ENCODE measurements at regions of chr18 and their contacts with region 1.

Region 1: GRCh38 chr18:45967007-45967706 is at the start of gene EPG5:
- DNase-seq: peak; percentile 88
- ATAC-seq: peak; percentile 100
- H3K4me3 Mint-ChIP-seq: peak within 1 kb of the TSS; percentile 98
- H3K27ac Mint-ChIP-seq: peak within 1 kb of the TSS; percentile 87
- H3K4me1 Mint-ChIP-seq: peaks cover 42% of the 10 kb centered on the region
- H3K27me3 Mint-ChIP-seq: no peaks in the 10 kb centered on the region
- CTCF ChIP-seq: no peak
- total RNA-seq, gene EPG5: 34.2 and 38.3 TPM in 2 replicates

Region 2: DNA sequence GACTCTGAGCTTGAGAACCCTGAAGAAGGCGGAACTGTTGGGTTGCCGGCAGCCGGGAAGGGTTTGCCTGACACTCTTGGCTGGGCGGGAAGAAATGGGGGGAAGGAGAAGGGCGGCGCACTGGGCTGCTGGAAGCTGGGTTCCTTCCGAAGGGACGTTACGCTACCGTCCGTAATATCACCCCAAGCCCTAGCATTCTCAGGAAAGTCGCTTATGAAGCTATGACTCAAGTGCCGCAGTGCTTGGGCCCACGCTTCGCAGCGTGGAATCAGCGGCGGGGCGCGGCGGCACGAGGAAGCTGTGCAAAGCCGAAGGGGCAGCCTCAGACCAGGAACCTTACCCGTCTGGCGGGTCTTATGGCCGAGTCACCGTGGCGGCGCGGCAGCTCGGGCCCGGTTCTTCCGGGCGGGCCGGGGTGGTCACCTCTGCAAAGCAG is 191.9 kb before region 1 on chr18:
- CTCF ChIA-PET with region 1: no interaction called
- POLR2A ChIA-PET with region 1: no interaction called
- intact Hi-C with region 1: loop called (anchors 5 kb)
- DNase-seq: peak; percentile 39
- ATAC-seq: peak; percentile 80
- H3K4me3 Mint-ChIP-seq: peak overlapping the region; percentile 85
- H3K27ac Mint-ChIP-seq: no peak overlapping the region
- H3K4me1 Mint-ChIP-seq: peaks cover 25% of the 10 kb centered on the region
- H3K27me3 Mint-ChIP-seq: peaks cover 40% of the 10 kb centered on the region
- CTCF ChIP-seq: no peak

Region 3: DNA sequence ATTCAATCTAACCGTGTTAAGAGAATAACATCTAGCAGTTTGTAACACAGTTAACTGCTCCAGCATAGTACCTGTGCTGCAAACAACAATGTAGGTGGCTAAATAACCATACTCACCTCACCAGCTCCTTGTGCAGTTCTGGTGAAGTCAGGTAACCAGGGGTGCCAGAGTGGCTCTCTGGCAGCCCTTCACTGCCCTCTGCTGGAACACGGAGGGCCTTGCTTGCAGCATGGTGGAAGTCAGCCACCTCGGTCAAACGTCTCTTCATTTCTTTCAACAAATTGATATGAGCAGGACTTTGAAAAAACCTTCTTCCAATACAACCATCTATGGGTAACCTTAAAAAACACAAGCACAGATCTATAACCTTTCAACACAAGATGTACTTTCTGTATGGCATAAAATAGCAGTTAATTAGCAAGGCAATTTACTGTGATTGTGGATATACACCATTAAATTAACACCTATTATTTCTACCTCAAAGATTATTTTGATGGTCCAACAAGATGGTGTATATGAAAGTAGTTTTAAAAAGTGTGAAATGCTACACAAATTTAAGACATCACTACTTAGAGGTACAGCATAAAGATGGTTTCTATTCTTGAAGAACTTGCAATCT is 56.6 kb before region 1 on chr18:
- CTCF ChIA-PET with region 1: no interaction called
- POLR2A ChIA-PET with region 1: no interaction called
- intact Hi-C with region 1: loop called (anchors 2 kb)
- DNase-seq: peak; percentile 23
- ATAC-seq: peak; percentile 72
- H3K4me3 Mint-ChIP-seq: no peak overlapping the region
- H3K27ac Mint-ChIP-seq: no peak overlapping the region
- H3K4me1 Mint-ChIP-seq: no peaks in the 10 kb centered on the region
- H3K27me3 Mint-ChIP-seq: no peaks in the 10 kb centered on the region
- CTCF ChIP-seq: peak; percentile 42

Region 4: DNA sequence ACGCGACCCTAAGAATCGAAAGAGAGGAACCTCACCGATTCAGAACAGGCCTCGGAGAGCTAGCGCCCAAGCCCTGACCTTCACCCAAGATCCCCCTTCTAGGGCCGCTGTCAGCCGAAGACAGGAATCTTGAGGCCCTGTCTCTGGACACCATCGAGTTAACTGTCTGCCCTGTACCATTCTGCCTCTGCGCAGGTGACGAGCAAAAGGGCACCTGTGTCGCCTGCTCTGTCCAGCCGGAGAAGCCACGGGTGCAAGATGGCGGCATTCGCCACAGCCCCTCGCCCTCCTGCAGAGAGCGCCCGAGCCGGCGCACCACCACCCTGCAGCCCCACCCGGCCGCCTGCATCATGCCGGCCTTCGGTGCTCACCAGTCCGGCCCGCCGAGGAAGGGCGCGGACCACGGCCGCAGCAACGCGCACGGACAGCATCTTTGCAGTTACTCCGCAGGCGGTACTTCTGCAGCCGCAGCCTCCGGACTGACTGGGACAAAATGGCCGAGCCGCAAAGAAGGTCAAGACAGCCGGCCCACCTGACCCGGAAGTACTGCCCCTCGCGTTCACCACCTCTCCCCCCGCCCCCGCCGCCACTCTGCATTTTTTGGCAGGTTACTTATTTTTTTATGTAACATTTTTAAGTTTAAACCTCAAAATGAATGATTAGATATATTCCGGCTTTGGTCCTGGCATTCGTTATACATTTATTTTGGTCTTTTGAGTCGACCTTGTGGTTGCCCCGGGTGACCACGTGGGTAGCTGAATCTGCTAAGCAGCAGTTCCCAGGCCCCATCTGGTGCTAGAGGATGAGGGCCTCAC is 130.9 kb after region 1 on chr18 and contains the start of gene ATP5F1A:
- CTCF ChIA-PET with region 1: no interaction called
- POLR2A ChIA-PET with region 1: no interaction called
- intact Hi-C with region 1: loop called (anchors 1 kb)
- DNase-seq: peak; percentile 78
- ATAC-seq: peak; percentile 86
- H3K4me3 Mint-ChIP-seq: peak within 1 kb of the TSS; percentile 97
- H3K27ac Mint-ChIP-seq: peak within 1 kb of the TSS; percentile 97
- H3K4me1 Mint-ChIP-seq: peaks cover 35% of the 10 kb centered on the region
- H3K27me3 Mint-ChIP-seq: no peaks in the 10 kb centered on the region
- CTCF ChIP-seq: no peak
- total RNA-seq, gene ATP5F1A: 336 and 348 TPM in 2 replicates

Region 5: GRCh38 chr18:46250084-46250811 is 283.1 kb after region 1 on chr18:
- CTCF ChIA-PET with region 1: no interaction called
- POLR2A ChIA-PET with region 1: no interaction called
- intact Hi-C with region 1: loop called (anchors 2 kb)
- DNase-seq: no peak
- ATAC-seq: peak; percentile 94
- H3K4me3 Mint-ChIP-seq: peak overlapping the region; percentile 78
- H3K27ac Mint-ChIP-seq: peak overlapping the region; percentile 94
- H3K4me1 Mint-ChIP-seq: peaks cover 46% of the 10 kb centered on the region
- H3K27me3 Mint-ChIP-seq: no peaks in the 10 kb centered on the region
- CTCF ChIP-seq: no peak